CD4-positive, alpha-beta T cell (primary cell): ENCODE measurements at regions of chr11 and their contacts with region 1.

Region 1: DNA sequence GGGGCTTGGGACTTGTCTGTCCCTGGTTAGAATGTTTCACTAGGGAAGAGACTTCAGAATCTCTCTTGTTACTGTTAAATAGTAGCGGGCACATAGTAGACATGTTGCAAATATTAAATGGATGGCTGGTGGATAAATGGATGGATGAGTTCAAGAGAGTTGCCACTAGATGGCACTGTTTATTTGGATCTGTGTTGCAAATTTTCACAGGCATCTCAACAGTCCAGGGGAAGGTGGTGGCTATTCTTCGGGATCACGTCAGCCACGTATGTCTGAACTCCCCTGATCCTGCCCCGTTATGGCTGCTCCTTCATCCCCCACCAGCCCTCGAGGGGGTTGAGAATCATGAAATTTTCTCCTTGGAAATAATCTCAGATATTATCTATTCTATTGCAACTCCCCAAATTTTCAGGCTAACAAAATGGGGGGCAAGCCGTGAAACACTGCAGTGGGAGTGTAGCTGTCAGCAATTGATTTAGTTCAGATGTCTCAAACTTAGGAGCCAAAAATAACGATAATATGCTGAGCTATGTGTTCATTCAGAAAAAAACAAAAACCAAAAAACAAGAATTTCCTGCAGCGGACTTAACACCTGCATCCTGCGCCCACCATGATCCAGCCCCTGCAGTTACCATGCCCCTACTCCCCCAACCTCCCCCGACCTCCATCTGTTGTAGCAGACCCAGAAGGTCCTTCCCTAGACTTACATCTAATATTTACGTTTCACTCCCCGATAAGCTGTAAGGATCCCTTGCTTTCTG is 29.1 kb upstream of the BIRC3 start:
- DNase-seq: peak in 8 of 14 experiments; percentile 4 to 86 (median 35)
- ATAC-seq: peak; percentile 89
- H3K4me3 ChIP-seq: no peak overlapping the region
- H3K4me3 Mint-ChIP-seq: peak overlapping the region; percentile 50
- H3K27ac ChIP-seq: no peak overlapping the region
- H3K27ac Mint-ChIP-seq: no peak overlapping the region
- H3K4me1 ChIP-seq: peaks cover 9% of the 10 kb centered on the region
- H3K4me1 Mint-ChIP-seq: peaks cover 24% of the 10 kb centered on the region
- H3K27me3 ChIP-seq: no peaks in the 10 kb centered on the region
- H3K27me3 Mint-ChIP-seq: no peaks in the 10 kb centered on the region
- CTCF ChIP-seq: peak; percentile 73

Region 2: DNA sequence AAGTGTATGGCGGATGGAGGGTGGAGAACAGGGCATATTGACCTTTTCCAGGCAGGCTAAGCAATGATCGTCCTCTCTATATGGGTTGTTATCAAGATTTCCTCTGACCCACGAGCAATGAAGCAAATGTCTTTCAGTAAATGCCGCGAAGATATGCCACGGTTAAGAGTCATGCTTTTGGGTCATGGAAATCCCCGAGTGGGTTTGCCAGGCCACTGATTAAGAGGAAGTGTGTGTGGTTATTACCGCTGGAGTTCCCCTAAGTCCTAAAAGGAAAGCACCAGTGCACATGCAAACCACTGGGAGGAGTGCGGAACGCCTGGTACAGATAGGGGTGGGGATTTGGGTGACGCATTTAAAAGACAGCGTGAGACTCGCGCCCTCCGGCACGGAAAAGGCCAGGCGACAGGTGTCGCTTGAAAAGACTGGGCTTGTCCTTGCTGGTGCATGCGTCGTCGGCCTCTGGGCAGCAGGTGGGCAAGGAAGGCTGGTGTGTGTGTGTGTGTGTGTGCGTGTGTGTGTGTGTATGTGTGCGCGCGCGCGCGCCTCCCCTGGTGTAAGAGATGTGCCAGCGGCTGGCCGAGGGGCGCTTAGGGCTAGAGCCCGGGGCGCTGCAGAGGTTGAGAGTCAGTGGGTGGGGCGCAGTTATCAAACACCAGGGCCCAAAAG is 29.1 kb after region 1 on chr11 and contains the start of gene BIRC3:
- CTCF ChIA-PET with region 1: interaction called, 185 read pairs
- POLR2A ChIA-PET with region 1: interaction called, 156 read pairs
- intact Hi-C with region 1: loop called in 1 of 2 experiments (anchors 1 kb)
- DNase-seq: peak; percentile 74 to 99 (median 88)
- ATAC-seq: peak; percentile 83
- H3K4me3 ChIP-seq: peak within 1 kb of the TSS; percentile 91
- H3K4me3 Mint-ChIP-seq: peak within 1 kb of the TSS; percentile 97
- H3K27ac ChIP-seq: peak within 1 kb of the TSS; percentile 95 to 96
- H3K27ac Mint-ChIP-seq: peak within 1 kb of the TSS; percentile 93
- H3K4me1 ChIP-seq: peaks cover 42% of the 10 kb centered on the region
- H3K4me1 Mint-ChIP-seq: peaks cover 75% of the 10 kb centered on the region
- H3K27me3 ChIP-seq: no peaks in the 10 kb centered on the region
- H3K27me3 Mint-ChIP-seq: no peaks in the 10 kb centered on the region
- CTCF ChIP-seq: peak; percentile 34
- total RNA-seq, gene BIRC3: 115 to 124 TPM

Region 3: DNA sequence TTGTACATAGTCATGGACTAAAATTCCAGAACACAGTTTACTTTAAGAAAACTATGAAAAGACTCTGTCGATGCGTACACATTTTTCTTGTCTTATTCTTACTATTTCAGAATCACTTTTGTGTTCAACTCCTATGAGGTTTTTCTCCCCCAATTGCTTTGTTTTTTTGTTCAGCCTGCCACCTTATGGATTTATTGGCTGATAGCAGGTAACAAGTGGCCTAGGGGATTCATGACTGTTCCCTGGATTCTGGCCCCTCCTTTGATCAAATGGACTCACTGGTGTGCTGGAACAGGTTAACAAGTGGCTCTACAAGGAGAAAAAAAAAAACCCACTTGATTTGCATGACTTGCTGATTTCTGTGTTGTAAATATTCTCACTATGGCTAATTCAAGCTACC is 326.3 kb after region 1 on chr11:
- CTCF ChIA-PET with region 1: interaction called, 3 read pairs
- POLR2A ChIA-PET with region 1: no interaction called
- intact Hi-C with region 1: loop called (anchors 2 kb)
- DNase-seq: no peak
- ATAC-seq: no peak
- H3K4me3 ChIP-seq: no peak overlapping the region
- H3K4me3 Mint-ChIP-seq: no peak overlapping the region
- H3K27ac ChIP-seq: no peak overlapping the region
- H3K27ac Mint-ChIP-seq: no peak overlapping the region
- H3K4me1 ChIP-seq: peaks cover 3% of the 10 kb centered on the region
- H3K4me1 Mint-ChIP-seq: no peaks in the 10 kb centered on the region
- H3K27me3 ChIP-seq: no peaks in the 10 kb centered on the region
- H3K27me3 Mint-ChIP-seq: peaks cover 4% of the 10 kb centered on the region
- CTCF ChIP-seq: no peak

Region 4: DNA sequence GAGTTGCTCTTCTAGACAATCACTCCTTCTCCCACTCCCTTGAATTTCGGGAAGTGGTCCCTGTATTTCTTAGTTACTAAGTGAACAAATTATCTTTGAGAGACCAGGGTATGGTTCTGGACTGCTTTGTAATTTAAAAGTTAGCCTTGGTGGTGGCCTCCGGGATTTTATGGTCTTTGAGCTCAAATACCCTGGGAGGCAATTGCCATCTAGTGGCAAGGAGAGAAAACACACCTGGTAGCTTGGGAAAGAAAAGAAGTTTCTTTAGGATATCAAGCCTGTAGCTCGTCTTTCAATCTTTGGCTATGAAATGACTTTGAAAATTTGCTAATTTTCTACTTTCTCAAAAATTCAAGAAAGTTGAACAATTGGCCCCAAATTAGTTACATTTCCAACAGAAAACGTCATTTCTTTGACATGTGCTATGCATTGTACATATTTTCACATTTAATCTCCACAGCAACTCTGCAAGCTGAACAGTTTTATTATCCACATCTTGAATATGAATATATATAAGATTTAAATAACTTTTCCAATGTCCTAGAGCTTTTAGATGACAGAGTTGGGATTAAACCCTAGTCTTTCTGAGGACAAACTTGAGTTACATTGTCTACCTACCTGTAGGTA is 378.3 kb after region 1 on chr11:
- CTCF ChIA-PET with region 1: interaction called, 3 read pairs
- POLR2A ChIA-PET with region 1: interaction called, 4 read pairs
- intact Hi-C with region 1: loop called (anchors 1 to 2 kb)
- DNase-seq: peak in 5 of 14 experiments; percentile 2 to 57 (median 45)
- ATAC-seq: peak; percentile 55
- H3K4me3 ChIP-seq: no peak overlapping the region
- H3K4me3 Mint-ChIP-seq: no peak overlapping the region
- H3K27ac ChIP-seq: no peak overlapping the region
- H3K27ac Mint-ChIP-seq: no peak overlapping the region
- H3K4me1 ChIP-seq: no peaks in the 10 kb centered on the region
- H3K4me1 Mint-ChIP-seq: no peaks in the 10 kb centered on the region
- H3K27me3 ChIP-seq: no peaks in the 10 kb centered on the region
- H3K27me3 Mint-ChIP-seq: peaks cover 9% of the 10 kb centered on the region
- CTCF ChIP-seq: peak; percentile 86

Region 5: DNA sequence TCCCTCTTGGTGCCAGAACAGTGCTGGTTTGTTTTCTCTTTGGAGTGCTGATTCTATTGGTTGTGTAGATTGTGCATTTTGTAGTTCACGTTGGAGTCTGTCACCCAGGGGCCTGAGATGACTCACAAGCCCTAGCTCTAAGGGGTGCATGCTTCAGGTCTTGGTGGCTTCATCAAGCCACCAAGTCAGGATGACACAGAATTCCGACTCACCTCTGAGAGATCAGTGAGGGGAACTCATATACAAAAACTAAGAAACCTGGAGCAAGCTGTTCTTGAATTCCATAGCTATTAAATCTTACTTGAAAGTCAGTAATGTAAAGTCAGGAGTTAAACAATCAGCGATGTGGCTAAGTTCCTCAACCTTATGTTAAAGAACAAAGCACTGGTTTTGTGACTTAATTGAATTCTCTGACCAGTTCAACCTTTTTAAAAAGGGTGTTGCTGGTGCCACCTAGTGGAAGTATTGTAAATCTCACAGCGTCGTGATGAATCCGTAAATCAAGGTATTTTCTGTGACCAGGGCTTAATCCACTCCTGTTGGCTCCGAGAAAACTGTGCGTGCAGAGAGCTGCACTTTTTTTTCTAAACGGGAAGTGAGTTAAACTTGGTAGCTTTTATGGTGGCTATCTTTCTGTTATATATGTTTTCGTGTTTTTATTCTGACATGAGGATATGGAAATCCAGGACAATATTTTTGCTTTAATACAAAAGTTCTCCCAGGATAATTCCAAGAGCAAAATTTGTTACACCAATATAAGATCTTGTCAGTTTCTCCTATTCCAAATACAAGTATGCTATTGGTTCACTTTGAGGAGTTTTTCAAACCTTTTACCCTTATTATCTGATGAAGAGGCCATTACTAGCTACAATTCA is 652.8 kb after region 1 on chr11:
- CTCF ChIA-PET with region 1: no interaction called
- POLR2A ChIA-PET with region 1: no interaction called
- intact Hi-C with region 1: loop called in 1 of 2 experiments (anchors 5 kb)
- DNase-seq: peak in 8 of 14 experiments; percentile 2 to 61 (median 18)
- ATAC-seq: peak; percentile 49
- H3K4me3 ChIP-seq: no peak overlapping the region
- H3K4me3 Mint-ChIP-seq: no peak overlapping the region
- H3K27ac ChIP-seq: no peak overlapping the region
- H3K27ac Mint-ChIP-seq: no peak overlapping the region
- H3K4me1 ChIP-seq: no peaks in the 10 kb centered on the region
- H3K4me1 Mint-ChIP-seq: peaks cover 5% of the 10 kb centered on the region
- H3K27me3 ChIP-seq: no peaks in the 10 kb centered on the region
- H3K27me3 Mint-ChIP-seq: peaks cover 16% of the 10 kb centered on the region
- CTCF ChIP-seq: peak; percentile 81